ENCODE measurements at regions of chr4 and their contacts with region 1.

Region 1: DNA sequence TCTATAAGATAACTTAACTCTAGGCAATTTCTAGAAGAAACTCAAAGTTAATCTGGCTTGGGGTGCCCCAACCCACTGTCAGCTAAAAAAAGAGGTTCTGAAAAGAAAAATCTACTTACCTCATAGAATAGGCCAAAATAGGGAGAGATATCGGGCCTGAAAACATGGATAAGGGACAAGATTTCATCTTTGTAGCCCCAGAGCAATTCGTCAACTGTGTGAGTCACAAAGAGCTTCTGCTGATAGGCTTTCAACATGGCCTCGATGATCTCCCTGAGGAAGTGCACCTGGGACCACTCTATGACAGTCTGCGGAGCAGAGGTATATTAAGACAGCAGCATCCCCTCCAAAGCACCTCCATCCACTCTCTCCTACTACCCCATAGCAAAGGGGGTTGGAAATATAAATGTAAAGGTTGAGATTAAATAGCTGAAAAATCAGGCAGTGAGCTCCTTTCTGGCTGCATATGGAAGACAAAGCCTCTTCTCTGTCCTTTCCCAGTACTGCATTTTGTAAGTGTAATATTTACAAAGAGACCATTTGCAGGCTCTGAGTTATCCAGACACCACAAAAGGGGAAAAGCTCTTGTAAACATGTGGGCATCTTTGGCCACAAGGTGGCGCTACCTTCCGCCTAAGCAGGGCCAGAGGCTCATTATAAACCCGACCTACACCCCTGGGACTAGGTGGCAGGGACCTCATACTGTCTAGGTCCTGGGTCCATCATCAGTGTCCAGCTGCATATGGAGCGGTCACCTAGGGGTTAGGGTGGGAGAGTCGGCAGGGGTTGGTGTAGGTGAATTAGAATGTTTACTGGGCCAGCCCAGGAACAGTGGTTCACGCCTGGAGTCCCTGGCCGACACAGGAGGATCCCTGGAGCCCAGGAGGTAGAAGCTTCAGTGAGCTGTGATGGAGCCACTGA is 31.5 kb upstream of the NUP54 start:
- DNase-seq: peak; percentile 77 to 93 (median 87)
- ATAC-seq: peak; percentile 65 to 89 (median 88)
- H3K4me3 ChIP-seq: no peak overlapping the region
- H3K27ac ChIP-seq: peak overlapping the region in 1 of 12 donors; percentile 11
- H3K4me1 ChIP-seq: peaks cover 0 to 30% (median 19%) of the 10 kb centered on the region in 12 donors
- H3K27me3 ChIP-seq: no peaks in the 10 kb centered on the region
- CTCF ChIP-seq: peak; percentile 85 to 97 (median 90)
- POLR2A ChIP-seq: no peak

Region 2: DNA sequence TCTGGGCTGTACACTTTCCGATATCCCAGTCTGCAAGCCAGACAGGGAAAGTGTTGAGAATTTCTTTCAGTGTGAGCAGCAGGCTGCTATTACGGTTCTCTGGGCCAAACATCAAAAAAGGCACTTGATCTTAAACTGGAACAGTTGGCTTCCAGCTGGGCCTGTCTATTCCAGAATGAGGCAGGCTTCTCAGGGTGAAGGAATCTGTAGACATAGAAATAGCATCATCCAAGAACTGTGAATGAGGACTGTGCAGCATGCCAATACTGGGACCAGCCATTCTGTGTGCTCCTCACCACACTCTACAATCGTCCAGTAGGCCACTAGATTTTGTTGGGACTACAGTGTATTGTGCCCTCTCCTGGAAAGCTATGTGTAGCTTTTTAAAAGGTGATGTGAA is 74.0 kb before region 1 on chr4:
- intact Hi-C with region 1: no loop called
- DNase-seq: peak in 1 of 5 donors; percentile 15
- ATAC-seq: peak; percentile 65 to 84 (median 76)
- H3K4me3 ChIP-seq: no peak overlapping the region
- H3K27ac ChIP-seq: no peak overlapping the region
- H3K4me1 ChIP-seq: peaks cover 0 to 5% (median 0%) of the 10 kb centered on the region in 12 donors
- H3K27me3 ChIP-seq: no peaks in the 10 kb centered on the region
- CTCF ChIP-seq: peak in 2 of 12 donors; percentile 9 to 20
- POLR2A ChIP-seq: no peak

Region 3: DNA sequence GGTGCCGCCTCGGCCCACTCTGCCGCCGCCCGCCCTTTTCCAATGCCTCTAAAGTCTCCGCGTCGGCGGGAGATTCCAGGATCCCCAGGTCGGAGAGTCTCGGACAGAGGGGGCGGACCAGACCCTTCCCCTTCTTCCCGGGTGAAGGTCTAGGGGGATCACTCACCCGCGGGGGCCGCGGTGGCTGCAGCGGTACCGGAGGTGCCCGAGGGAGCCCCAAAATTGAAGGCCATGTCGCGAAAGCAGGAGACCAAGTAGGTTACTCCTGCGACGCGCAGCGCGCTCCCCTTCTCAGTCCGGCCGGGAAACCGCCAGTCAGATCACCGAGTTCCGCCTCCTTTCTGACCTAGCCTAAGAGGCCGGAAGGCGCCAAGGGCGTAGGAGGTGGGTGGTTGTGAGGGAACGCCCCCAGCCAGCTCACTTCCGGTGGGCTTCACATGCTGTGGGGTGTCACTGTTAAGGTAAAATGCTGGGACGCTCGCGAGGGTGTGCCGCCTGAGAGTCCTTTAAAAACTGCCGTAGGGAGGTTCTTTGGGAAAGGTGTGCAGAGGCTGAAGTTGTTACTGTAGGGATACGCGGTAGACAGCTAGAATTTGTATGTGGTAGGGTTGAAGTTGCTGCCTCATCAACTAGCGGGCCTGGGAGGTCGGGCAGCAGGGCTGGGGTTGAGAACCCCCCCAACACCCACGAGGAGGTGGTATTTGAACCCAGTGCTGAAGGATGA is 31.4 kb before region 1 on chr4 and contains the start of gene NUP54:
- intact Hi-C with region 1: no loop called
- DNase-seq: peak; percentile 93 to 96 (median 95)
- ATAC-seq: peak; percentile 99 to 100 (median 99)
- H3K4me3 ChIP-seq: peak within 1 kb of the TSS; percentile 65 to 97 (median 93)
- H3K27ac ChIP-seq: peak within 1 kb of the TSS; percentile 40 to 94 (median 88)
- H3K4me1 ChIP-seq: peaks cover 6 to 30% (median 25%) of the 10 kb centered on the region in 12 donors
- H3K27me3 ChIP-seq: no peaks in the 10 kb centered on the region
- CTCF ChIP-seq: no peak
- POLR2A ChIP-seq: peak in 1 of 2 donors; percentile 70
- total RNA-seq, gene NUP54: 14.2 to 26.7 (median 18.1) TPM

Region 4: DNA sequence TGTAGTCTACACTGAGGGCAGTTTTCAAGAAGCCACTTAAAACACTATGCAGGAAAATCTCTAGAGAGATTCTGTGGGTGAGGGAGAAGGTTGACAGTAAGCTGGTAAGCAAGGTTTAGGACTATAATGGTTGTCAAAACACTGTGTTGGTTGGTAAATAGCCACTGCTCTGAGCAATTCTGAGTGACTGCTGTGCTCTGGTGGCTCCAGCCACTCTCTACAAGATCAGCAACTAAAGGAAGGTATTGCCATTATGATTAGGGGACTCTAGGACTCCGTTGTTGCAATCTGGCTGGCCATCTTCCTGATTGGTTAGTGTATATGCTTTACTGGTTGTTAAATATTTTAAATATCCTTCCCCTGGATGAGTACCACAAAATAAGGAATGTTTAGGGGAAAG is 66.4 kb after region 1 on chr4:
- intact Hi-C with region 1: loop called in 5 of 10 experiments (anchors 5 to 10 kb)
- DNase-seq: no peak
- ATAC-seq: peak in 1 of 4 donors; percentile 30
- H3K4me3 ChIP-seq: no peak overlapping the region
- H3K27ac ChIP-seq: no peak overlapping the region
- H3K4me1 ChIP-seq: peaks cover 0 to 6% (median 3%) of the 10 kb centered on the region in 12 donors
- H3K27me3 ChIP-seq: peaks cover 0 to 24% (median 0%) of the 10 kb centered on the region in 9 donors
- CTCF ChIP-seq: peak in 1 of 12 donors; percentile 12
- POLR2A ChIP-seq: no peak

Region 5: GRCh38 chr4:76257824-76258223 is 78.2 kb after region 1 on chr4:
- intact Hi-C with region 1: loop called in 5 of 10 experiments (anchors 5 to 10 kb)
- DNase-seq: no peak
- ATAC-seq: no peak
- H3K4me3 ChIP-seq: no peak overlapping the region
- H3K27ac ChIP-seq: no peak overlapping the region
- H3K4me1 ChIP-seq: no peaks in the 10 kb centered on the region
- H3K27me3 ChIP-seq: peaks cover 0 to 11% (median 0%) of the 10 kb centered on the region in 9 donors
- CTCF ChIP-seq: no peak
- POLR2A ChIP-seq: no peak

Region 6: GRCh38 chr4:76377911-76378310 is 198.3 kb after region 1 on chr4:
- intact Hi-C with region 1: loop called in 3 of 10 experiments (anchors 5 to 10 kb)
- DNase-seq: no peak
- ATAC-seq: peak in 2 of 4 donors; percentile 26 to 55
- H3K4me3 ChIP-seq: no peak overlapping the region
- H3K27ac ChIP-seq: no peak overlapping the region
- H3K4me1 ChIP-seq: peaks cover 0 to 9% (median 6%) of the 10 kb centered on the region in 12 donors
- H3K27me3 ChIP-seq: no peaks in the 10 kb centered on the region
- CTCF ChIP-seq: peak in 11 of 12 donors; percentile 19 to 52 (median 41)
- POLR2A ChIP-seq: no peak

Region 7: DNA sequence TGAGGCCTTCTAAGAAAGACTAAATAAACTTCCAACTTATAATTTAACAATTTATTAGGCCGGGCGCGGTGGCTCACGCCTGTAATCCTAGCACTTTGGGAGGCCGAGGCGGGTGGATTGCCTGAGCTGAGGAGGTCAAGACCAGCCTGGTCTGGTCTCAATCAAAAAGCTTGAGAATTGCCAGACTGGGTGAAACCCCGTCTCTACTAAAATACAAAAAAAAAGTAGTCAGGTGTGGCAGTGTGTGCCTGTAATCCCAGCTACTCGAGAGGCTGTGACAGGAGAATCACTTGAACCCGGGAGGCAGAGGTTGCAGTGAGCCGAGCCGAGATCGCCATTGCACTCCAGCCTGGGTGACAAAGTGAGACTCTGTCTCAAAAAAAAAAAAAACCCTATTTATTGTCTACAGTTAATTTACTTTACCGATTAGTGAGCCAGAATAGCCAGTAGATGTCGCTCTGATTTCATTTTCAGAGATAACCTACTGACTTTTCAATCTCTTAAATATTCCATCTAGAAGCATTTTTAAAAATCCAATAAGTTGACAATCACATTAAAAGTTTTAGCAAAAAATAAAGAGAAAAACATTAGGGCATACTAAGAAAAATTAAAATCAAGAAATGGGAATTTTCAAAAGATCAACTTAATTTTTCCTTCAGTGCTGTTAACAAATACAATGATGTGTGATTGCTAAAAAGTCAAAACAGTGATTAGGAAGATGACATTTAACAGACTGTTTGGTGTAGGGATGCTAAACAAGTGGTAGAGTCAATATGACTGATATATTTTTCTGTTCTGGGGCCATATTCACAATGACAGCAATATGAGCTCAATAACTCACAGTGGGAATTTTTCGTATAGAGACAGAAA is 251.1 kb after region 1 on chr4:
- intact Hi-C with region 1: loop called in 3 of 10 experiments (anchors 10 kb)
- DNase-seq: no peak
- ATAC-seq: peak in 1 of 4 donors; percentile 41
- H3K4me3 ChIP-seq: no peak overlapping the region
- H3K27ac ChIP-seq: no peak overlapping the region
- H3K4me1 ChIP-seq: peaks cover 0 to 11% (median 0%) of the 10 kb centered on the region in 12 donors
- H3K27me3 ChIP-seq: peaks cover 0 to 14% (median 0%) of the 10 kb centered on the region in 9 donors
- CTCF ChIP-seq: peak; percentile 41 to 76 (median 68)
- POLR2A ChIP-seq: no peak

Region 8: GRCh38 chr4:76504613-76505465 is 325.2 kb after region 1 on chr4:
- intact Hi-C with region 1: loop called in 7 of 10 experiments (anchors 2 to 5 kb)
- DNase-seq: no peak
- ATAC-seq: peak in 2 of 4 donors; percentile 45 to 47
- H3K4me3 ChIP-seq: no peak overlapping the region
- H3K27ac ChIP-seq: no peak overlapping the region
- H3K4me1 ChIP-seq: no peaks in the 10 kb centered on the region
- H3K27me3 ChIP-seq: no peaks in the 10 kb centered on the region
- CTCF ChIP-seq: peak; percentile 49 to 78 (median 67)
- POLR2A ChIP-seq: no peak

Measured in heart left ventricle (tissue), 16 donors.